ENCODE measurements at regions of chr4 and their contacts with region 1.

Region 1: GRCh38 chr4:114250439-114250891 is 271.0 kb upstream of the ARSJ start:
- DNase-seq: no peak
- H3K4me3 ChIP-seq: no peak overlapping the region
- H3K27ac ChIP-seq: no peak overlapping the region
- H3K4me1 ChIP-seq: no peaks in the 10 kb centered on the region
- CTCF ChIP-seq: no peak

Region 2: DNA sequence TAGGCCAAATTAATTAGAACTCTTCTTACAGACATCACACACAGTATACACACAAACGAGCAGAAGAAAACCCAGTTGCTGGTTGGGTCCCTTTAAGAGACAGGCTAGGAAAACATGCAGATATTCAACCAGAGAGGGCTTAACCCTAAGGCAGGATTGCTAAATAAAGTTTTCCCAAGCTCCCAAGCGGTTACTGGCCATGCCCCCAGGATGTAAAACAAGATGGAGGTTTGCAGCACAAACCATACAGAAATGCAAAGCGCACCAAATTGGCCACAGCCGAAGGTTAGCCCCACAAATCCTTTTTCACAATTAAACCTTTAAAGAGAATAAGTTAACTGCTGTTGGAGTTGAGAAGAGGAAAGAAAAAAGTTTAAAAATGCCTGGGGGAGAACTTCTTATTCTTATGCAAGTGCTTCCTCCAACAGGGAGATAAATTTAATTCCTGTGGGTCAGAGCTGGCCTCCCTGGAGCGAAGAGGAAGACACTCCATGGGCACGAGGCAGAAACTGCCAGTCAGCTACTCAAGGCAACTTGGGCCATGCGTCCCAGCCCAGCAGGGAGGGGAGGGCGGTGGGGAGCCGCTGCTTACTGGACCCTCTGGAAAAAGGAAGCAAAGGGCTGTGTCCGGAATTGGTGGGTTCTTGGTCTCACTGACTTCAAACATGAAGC is 103.4 kb before region 1 on chr4:
- CTCF ChIA-PET with region 1: no interaction called
- POLR2A ChIA-PET with region 1: no interaction called
- intact Hi-C with region 1: no loop called
- DNase-seq: no peak
- H3K4me3 ChIP-seq: no peak overlapping the region
- H3K27ac ChIP-seq: no peak overlapping the region
- H3K4me1 ChIP-seq: no peaks in the 10 kb centered on the region
- CTCF ChIP-seq: no peak

Region 3: DNA sequence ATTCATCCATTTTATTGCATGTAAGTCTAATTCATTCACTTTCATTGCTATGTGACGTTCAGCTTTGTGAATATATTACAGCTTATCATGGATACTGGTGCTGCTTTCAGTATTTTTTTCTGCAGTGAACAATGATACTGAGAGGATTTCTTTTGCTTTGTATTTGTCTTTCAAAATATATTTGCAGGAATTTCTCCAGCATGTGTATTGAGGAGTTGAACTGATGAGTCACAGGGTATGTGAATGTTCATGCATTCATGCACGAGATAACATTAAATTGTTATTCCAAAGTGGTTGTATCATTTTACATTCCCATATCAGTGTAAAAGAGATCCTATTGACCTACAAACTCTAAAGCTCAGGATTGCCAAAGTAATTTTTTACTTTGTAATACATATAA is 12.8 kb after region 1 on chr4:
- CTCF ChIA-PET with region 1: no interaction called
- POLR2A ChIA-PET with region 1: interaction called, 8 read pairs
- intact Hi-C with region 1: loop called (anchors 1 kb)
- DNase-seq: no peak
- H3K4me3 ChIP-seq: no peak overlapping the region
- H3K27ac ChIP-seq: no peak overlapping the region
- H3K4me1 ChIP-seq: no peaks in the 10 kb centered on the region
- CTCF ChIP-seq: no peak

Region 4: GRCh38 chr4:114547340-114548134 is 297.1 kb after region 1 on chr4:
- CTCF ChIA-PET with region 1: no interaction called
- POLR2A ChIA-PET with region 1: no interaction called
- intact Hi-C with region 1: no loop called
- DNase-seq: no peak
- H3K4me3 ChIP-seq: no peak overlapping the region
- H3K27ac ChIP-seq: no peak overlapping the region
- H3K4me1 ChIP-seq: no peaks in the 10 kb centered on the region
- CTCF ChIP-seq: no peak

Measured in OCI-LY7 (cell line).